HepG2 (cell line): ENCODE measurements at regions of chr3 and their contacts with region 1.

Region 1: DNA sequence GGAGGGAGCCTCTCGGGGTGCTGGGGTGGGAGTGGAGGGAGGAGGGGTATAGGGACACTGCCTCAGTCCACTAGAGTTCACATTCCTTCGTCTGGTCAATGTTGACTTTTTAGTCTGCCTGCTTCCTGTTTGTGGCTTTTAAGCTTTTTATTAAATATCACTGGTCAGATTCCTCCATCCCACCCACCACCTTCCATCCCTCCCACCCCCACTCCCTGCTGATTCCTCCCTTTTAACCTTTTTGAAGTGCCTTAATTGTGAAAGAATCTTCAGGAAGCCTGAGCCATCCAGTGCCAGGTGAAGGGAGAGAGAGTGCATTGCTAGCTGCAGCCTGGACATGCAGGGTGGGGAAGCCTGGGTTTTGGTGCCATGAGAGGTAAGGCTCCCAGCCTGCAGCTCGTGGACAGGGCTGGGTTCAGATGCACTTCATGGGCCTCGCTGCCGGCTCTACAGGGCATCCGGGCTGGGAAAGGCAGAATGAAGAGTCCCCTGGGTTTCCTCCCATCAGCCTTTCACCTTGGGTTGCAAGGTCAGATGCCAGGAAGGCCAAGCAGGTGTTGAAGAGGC is 105.9 kb downstream of the DNAJB8 start:
- DNase-seq: peak; percentile 91
- ATAC-seq: peak; percentile 86
- H3K4me3 ChIP-seq: peak overlapping the region in 2 of 3 experiments; percentile 21 to 52; a peak in 2 of 6 replicates
- H3K27ac ChIP-seq: peak overlapping the region; percentile 86
- H3K4me1 ChIP-seq: peaks cover 74% of the 10 kb centered on the region
- H3K27me3 ChIP-seq: no peaks in the 10 kb centered on the region
- CTCF ChIP-seq: no peak
- EP300 ChIP-seq: peak in 1 of 2 experiments; percentile 88; a peak in 3 of 4 replicates
- POLR2A ChIP-seq: no peak
- RAD21 ChIP-seq: no peak

Region 2: GRCh38 chr3:128343287-128344051 is 17.3 kb before region 1 on chr3:
- CTCF ChIA-PET with region 1: no interaction called
- POLR2A ChIA-PET with region 1: interaction called, 29 read pairs
- in situ Hi-C with region 1: no loop called
- intact Hi-C with region 1: no loop called
- DNase-seq: peak; percentile 90
- ATAC-seq: peak; percentile 94
- H3K4me3 ChIP-seq: peak overlapping the region in 1 of 3 experiments; percentile 10; a peak in 1 of 6 replicates
- H3K27ac ChIP-seq: peak overlapping the region; percentile 81
- H3K4me1 ChIP-seq: peaks cover 58% of the 10 kb centered on the region
- H3K27me3 ChIP-seq: no peaks in the 10 kb centered on the region
- CTCF ChIP-seq: no peak
- EP300 ChIP-seq: peak in 1 of 2 experiments; percentile 70; a peak in 2 of 4 replicates
- POLR2A ChIP-seq: peak; percentile 36 to 60; a peak in 3 of 4 replicates
- RAD21 ChIP-seq: no peak

Region 3: DNA sequence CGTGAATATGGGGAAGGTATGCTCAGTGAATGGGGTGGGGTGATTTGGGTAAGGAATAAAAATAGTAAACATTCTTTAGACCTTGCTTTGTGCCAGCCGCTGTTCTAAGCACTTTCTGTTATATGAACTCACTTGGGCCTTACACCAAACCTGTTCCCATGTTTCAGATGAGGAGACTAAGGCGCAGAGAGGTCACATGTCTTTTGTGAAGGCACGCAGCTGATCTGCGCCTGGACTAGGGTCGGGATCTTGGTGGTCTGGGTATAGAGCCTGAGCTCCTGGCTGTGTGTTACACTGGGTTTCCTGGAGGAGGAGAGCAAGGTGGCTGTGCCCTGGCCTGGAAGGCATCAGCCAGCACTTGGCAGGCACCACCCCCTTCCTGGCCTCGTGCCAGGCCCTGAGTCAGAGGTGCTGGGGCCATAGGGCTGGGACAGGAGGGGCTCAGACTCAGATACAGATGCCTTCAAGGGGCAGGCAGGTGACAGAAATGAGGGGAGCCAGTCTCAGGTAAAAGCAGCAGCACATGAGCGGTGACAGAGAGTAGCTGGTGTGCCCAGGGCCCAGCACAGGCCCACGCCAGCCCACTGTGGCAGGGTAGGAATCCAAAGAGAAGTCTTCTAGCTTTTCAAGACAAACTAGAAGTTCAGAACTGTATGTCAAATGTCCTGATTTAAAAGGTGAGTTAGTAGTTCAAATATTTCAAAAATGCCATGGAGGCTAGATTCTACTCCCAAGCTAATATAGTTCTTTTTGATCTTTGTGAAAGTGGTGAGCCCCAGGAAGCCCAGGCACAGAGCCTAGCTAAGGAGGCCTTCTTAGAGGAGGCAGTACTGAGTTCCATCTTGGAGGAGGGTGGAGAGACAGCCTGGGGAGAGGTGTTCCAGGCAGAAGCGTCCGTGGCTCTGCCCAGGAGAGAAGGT is 22.8 kb after region 1 on chr3:
- CTCF ChIA-PET with region 1: no interaction called
- POLR2A ChIA-PET with region 1: interaction called, 14 read pairs
- in situ Hi-C with region 1: no loop called
- intact Hi-C with region 1: loop called (anchors 2 kb)
- DNase-seq: peak; percentile 37
- ATAC-seq: peak; percentile 23; the same call in 2 of the 3 replicates
- H3K4me3 ChIP-seq: no peak overlapping the region
- H3K27ac ChIP-seq: no peak overlapping the region
- H3K4me1 ChIP-seq: peaks cover 52% of the 10 kb centered on the region
- H3K27me3 ChIP-seq: no peaks in the 10 kb centered on the region
- CTCF ChIP-seq: no peak
- EP300 ChIP-seq: no peak
- POLR2A ChIP-seq: no peak
- RAD21 ChIP-seq: no peak

Region 4: GRCh38 chr3:128482666-128483656 is 122.2 kb after region 1 on chr3:
- CTCF ChIA-PET with region 1: no interaction called
- POLR2A ChIA-PET with region 1: no interaction called
- in situ Hi-C with region 1: no loop called
- intact Hi-C with region 1: no loop called
- DNase-seq: no peak
- ATAC-seq: no peak
- H3K4me3 ChIP-seq: no peak overlapping the region
- H3K27ac ChIP-seq: no peak overlapping the region
- H3K4me1 ChIP-seq: peaks cover 16% of the 10 kb centered on the region
- H3K27me3 ChIP-seq: no peaks in the 10 kb centered on the region
- CTCF ChIP-seq: no peak
- EP300 ChIP-seq: no peak
- POLR2A ChIP-seq: no peak
- RAD21 ChIP-seq: no peak